H1 (cell line): ENCODE measurements at regions of chr12 and their contacts with region 1.

Region 1: DNA sequence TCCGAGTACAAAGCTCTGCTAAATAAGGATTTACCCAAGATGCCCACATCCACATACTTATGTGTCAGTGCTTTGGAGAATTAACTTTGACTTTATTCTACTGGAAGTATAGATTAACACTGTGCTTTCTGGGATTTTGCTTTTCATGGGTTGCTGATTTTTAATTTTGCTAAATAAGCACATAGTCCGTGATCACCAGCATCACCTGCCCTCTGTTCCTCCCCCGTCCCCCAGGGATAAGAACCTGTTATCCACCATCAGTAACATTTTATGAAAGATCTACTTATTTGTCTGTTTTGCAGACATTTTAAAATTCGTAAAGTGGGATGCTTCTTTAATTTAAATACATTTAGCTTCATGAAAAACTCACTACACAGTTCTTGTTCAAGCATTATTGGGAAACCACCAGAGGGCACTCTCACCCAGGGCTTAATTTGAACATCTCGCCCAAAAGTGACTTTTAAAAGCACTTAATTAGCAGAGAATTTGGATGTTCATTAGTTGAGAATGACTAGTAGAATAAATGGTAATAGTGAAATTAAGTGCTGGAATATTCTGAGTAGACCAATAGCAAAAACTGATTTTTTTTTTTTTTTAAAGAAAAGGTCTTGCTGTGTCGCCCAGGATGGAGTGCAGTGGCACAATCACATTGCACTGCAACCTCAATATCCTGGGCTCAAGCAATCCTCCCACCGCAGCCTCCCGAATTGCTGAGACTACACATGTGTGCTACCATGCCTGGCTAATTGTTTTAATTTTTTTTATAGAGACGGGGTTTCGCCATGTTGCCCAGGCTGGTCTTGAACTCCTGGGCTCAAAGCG is 35.7 kb downstream of the MRPL42 start:
- DNase-seq: peak; percentile 9 to 61
- H3K4me3 ChIP-seq: no peak overlapping the region
- H3K27ac ChIP-seq: no peak overlapping the region
- H3K4me1 ChIP-seq: no peaks in the 10 kb centered on the region
- H3K27me3 ChIP-seq: no peaks in the 10 kb centered on the region
- CTCF ChIP-seq: peak in 2 of 3 experiments; percentile 55 to 57; a peak in 3 of 4 replicates
- EP300 ChIP-seq: no peak
- POLR2A ChIP-seq: no peak
- RAD21 ChIP-seq: peak; percentile 78 to 80

Region 2: DNA sequence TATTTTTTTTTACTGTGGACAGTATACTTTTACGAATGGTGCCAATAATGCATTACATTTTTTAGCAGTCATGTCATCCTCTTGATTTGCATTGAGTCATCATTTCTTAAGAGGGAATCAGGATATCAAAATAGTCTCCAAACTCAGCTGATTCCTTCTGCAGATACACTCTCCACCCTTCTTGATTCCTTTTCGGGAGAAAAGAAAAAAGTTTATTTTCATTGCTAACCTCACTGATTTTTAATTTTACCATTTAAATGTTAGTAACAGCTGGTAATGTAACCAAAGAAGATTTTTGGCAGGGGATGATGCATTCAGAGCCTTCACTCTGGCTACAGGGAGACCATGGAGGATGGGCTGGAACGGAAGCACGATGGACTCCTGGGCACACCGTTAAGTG is 11.8 kb after region 1 on chr12:
- CTCF ChIA-PET with region 1: interaction called, 63 read pairs
- POLR2A ChIA-PET with region 1: no interaction called
- DNase-seq: no peak
- H3K4me3 ChIP-seq: no peak overlapping the region
- H3K27ac ChIP-seq: no peak overlapping the region
- H3K4me1 ChIP-seq: no peaks in the 10 kb centered on the region
- H3K27me3 ChIP-seq: no peaks in the 10 kb centered on the region
- CTCF ChIP-seq: no peak
- EP300 ChIP-seq: no peak
- POLR2A ChIP-seq: no peak
- RAD21 ChIP-seq: no peak

Region 3: DNA sequence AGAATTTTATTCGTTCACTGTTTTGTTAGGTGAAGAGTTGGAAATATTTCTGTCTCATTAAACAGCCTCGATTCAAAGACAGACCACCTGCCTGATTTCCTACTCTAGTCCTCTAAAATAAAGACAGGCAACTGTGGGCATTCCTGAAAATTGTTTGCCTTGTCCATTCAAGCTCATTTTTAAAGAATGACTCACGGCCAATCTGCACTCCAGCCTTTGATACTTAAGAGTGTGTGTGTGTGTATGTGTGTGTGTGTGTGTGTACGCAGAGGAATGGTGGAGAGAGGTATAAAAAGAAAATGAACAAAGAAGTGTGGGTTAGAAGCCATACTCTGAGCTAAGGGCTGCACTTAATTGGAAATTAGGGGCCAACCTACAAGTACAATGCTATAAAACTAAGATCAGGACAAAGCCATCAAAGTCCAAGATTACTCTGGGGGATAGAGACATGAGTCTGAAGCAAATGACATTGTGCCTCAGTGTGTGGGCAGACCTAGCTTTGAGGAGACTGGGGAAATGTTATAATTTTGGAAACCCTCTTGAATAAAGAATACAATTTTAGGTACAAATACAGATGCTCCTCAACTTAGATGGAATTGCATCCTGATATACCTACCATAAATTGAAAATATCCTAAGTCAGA is 23.9 kb after region 1 on chr12:
- CTCF ChIA-PET with region 1: interaction called, 22 read pairs
- POLR2A ChIA-PET with region 1: no interaction called
- DNase-seq: no peak
- H3K4me3 ChIP-seq: no peak overlapping the region
- H3K27ac ChIP-seq: no peak overlapping the region
- H3K4me1 ChIP-seq: no peaks in the 10 kb centered on the region
- H3K27me3 ChIP-seq: no peaks in the 10 kb centered on the region
- CTCF ChIP-seq: no peak
- EP300 ChIP-seq: no peak
- POLR2A ChIP-seq: no peak
- RAD21 ChIP-seq: no peak

Region 4: DNA sequence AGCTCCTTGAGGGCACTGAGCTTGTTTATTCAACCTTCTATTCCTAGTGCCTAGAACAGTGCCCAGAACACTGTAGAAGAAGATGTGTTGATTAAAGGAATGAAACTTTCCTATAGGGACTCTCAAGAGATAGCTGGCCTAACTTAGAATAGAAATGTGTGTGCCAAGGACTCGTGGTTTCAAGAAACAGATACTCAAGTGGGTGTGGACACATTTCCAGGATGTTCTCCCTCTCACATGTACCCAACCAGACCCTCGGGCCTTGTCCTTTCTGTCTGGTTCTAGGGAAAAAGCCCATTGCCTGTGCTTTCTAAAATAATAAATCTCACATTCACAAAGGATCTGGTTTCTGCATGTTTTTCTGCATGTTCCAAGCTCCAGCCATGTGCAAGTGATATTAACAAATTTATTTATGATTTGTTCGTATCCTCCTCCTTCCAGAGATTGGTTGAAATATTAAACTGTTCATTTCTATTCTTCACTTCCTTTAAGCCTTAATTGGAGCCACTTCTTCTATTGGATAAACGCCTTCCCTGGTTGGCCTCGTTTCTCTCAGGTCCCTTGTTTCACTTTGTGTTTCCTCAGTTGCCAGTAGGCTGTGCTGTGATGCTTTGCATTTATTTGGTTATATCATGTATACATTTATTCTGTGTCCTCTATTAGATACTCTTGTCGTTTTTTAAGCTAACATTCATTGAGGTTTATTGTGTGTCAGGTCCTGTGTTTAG is 263.9 kb after region 1 on chr12:
- CTCF ChIA-PET with region 1: interaction called, 11 read pairs
- POLR2A ChIA-PET with region 1: no interaction called
- DNase-seq: no peak
- H3K4me3 ChIP-seq: no peak overlapping the region
- H3K27ac ChIP-seq: no peak overlapping the region
- H3K4me1 ChIP-seq: no peaks in the 10 kb centered on the region; a peak in 3 of 7 replicates
- H3K27me3 ChIP-seq: no peaks in the 10 kb centered on the region
- CTCF ChIP-seq: peak in 2 of 3 experiments; percentile 49 to 50; a peak in 2 of 4 replicates
- EP300 ChIP-seq: no peak
- POLR2A ChIP-seq: no peak
- RAD21 ChIP-seq: peak; percentile 69 to 80

Region 5: GRCh38 chr12:93839064-93839463 is 336.1 kb after region 1 on chr12:
- CTCF ChIA-PET with region 1: interaction called, 11 read pairs
- POLR2A ChIA-PET with region 1: no interaction called
- DNase-seq: no peak
- H3K4me3 ChIP-seq: no peak overlapping the region
- H3K27ac ChIP-seq: no peak overlapping the region
- H3K4me1 ChIP-seq: peaks cover 0 to 2% (median 1%) of the 10 kb centered on the region in 4 experiments; a peak in 2 of 7 replicates
- H3K27me3 ChIP-seq: no peaks in the 10 kb centered on the region
- CTCF ChIP-seq: no peak
- EP300 ChIP-seq: no peak
- POLR2A ChIP-seq: no peak
- RAD21 ChIP-seq: peak; percentile 30 to 38; a peak in 3 of 4 replicates